Common myeloid progenitor, CD34-positive (primary cell): ENCODE measurements at regions of chr3 and their contacts with region 1.

Region 1: DNA sequence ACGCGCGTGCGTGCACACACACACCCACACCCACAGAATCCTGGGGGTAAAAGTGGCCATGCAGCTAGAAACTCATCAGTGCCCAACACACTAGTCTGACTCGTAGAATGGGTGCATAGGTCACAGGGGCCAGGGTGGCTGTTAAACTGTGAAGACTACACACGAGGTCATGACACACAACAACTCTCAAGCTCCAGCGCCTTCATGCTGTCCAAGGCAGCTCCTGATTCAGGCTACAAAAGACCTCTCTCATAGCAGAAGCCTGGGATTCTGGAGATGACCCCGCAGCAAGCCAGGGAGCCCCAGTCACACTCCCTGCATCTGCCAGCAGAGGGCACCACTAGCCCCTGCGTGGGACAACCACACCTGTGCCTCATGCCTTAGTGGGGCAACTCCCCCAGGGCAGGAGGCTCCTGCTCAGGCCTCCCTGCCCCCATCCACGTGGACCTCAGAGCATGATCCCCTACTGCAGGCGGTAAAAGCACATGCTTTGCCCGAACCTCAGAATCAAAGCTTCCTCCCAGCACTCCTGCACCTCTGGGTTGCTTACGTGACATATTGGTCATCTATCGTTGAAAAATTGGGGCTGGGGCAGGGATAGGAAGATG is 93.1 kb downstream of the LRIG1 start:
- DNase-seq: peak; percentile 36 to 62 (median 57)
- H3K4me3 ChIP-seq: no peak overlapping the region
- H3K27ac ChIP-seq: no peak overlapping the region
- H3K4me1 ChIP-seq: peaks cover 0 to 2% (median 0%) of the 10 kb centered on the region in 4 experiments
- H3K27me3 ChIP-seq: no peaks in the 10 kb centered on the region

Region 2: DNA sequence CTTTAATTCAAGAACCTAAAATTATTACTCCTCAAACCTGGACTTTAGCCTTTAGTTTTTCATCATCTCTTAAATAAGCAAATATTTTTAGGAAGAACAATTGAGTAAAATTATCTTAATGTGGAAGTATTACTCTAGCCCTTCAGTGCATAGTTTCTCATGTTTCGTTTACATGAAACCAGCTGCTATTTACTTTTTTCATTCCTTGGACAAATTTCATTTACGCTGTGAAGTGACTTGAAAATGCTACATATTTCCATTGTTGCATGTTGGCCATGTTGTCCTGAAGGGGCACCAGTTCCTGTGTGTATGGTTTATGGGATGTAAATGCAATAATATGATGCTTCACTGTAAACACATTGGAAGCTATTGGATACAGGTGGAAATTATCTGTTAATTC is 137.0 kb before region 1 on chr3:
- CTCF ChIA-PET with region 1: no interaction called
- POLR2A ChIA-PET with region 1: no interaction called
- DNase-seq: no peak
- H3K4me3 ChIP-seq: no peak overlapping the region
- H3K27ac ChIP-seq: no peak overlapping the region
- H3K4me1 ChIP-seq: no peaks in the 10 kb centered on the region
- H3K27me3 ChIP-seq: no peaks in the 10 kb centered on the region

Region 3: DNA sequence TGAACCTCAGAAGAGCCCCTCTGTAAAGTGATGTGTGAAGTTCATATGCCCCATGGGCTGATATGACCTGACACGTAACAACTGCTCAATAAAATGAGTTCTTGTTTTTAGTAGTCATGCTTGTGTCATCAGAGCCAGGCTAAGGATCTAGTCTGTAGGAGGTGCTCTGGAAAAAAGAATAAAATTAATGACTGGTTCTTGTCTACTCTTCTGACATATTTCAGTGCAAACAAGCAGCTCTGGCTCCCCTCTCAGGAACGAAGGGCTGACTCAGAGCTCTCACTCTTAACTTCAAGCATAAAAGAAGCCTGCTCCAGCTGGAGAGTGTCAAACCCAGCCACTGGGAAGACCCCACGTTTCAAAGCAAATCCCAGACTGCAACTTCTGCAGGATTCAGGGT is 16.1 kb after region 1 on chr3:
- CTCF ChIA-PET with region 1: interaction called, 18 read pairs
- POLR2A ChIA-PET with region 1: no interaction called
- DNase-seq: no peak
- H3K4me3 ChIP-seq: no peak overlapping the region
- H3K27ac ChIP-seq: no peak overlapping the region
- H3K4me1 ChIP-seq: no peaks in the 10 kb centered on the region
- H3K27me3 ChIP-seq: no peaks in the 10 kb centered on the region

Region 4: DNA sequence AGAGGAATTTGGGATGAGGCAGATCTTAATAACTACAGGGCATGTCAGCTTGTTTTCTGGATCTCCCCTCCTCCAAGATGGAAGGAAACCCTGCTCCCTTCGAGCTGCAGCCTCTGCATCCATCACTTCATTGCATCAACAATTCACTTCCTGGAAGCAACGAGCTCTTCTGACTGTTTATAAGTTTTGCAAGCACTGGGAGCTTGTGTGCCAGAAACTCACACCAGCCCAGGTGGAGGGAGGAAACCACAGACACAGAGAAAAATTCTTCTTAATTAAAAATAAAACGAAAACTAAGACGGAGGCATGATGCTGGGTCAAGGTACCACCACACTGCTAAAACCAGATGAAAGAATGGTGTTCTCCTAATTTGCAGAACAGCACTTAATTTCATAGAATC is 82.5 kb after region 1 on chr3:
- CTCF ChIA-PET with region 1: interaction called, 15 read pairs
- POLR2A ChIA-PET with region 1: no interaction called
- DNase-seq: peak in 2 of 3 donors; percentile 28 to 33
- H3K4me3 ChIP-seq: peak overlapping the region in 2 of 7 experiments; percentile 25 to 45
- H3K27ac ChIP-seq: no peak overlapping the region
- H3K4me1 ChIP-seq: peaks cover 5 to 43% (median 19%) of the 10 kb centered on the region in 4 experiments
- H3K27me3 ChIP-seq: no peaks in the 10 kb centered on the region

Region 5: DNA sequence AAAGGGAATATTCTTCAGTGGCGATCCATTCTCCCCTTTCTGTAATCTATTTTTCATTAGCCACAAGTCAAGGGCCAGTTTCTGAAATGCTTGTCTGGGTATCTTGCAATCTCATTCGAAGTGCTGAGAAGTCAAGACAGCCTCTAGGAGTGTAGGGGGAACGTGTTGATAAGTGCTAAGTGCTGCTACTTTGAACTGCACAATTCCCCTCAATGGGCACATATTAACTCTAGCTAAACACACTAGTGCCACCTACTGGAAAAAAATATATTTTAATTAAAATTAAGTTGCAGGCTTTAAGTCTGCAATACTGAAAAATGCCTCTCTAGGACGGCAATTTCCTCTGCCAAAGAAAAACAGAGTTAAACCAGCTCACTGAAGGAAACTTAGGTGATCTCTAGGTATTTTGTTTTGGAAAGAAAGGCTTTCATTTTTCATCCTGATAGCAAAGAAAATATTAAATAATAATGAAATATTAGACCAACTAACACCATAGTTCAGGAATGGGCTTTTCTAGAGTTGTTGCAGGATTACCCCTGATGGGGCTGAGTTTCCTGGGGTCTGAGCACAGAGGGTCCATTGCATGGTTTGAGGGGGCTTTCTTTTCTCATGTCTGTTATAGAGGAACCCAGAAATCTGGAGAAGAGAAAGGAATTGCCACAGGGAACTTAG is 408.5 kb after region 1 on chr3:
- CTCF ChIA-PET with region 1: interaction called, 107 read pairs
- POLR2A ChIA-PET with region 1: no interaction called
- DNase-seq: peak; percentile 51 to 77 (median 74)
- H3K4me3 ChIP-seq: no peak overlapping the region
- H3K27ac ChIP-seq: no peak overlapping the region
- H3K4me1 ChIP-seq: no peaks in the 10 kb centered on the region
- H3K27me3 ChIP-seq: peaks cover 0 to 3% (median 0%) of the 10 kb centered on the region in 5 experiments